Mucosa of descending colon (tissue), 3 donors: ENCODE measurements at regions of chr6 and their contacts with region 1.

Region 1: GRCh38 chr6:113858480-113859348 is 1.6 kb downstream of the MARCKS start:
- DNase-seq: peak; percentile 90 to 95 (median 93)
- ATAC-seq: peak; percentile 85
- H3K4me3 ChIP-seq: peak overlapping the region; percentile 75
- H3K4me1 ChIP-seq: peaks cover 21% of the 10 kb centered on the region
- CTCF ChIP-seq: peak; percentile 95

Region 2: GRCh38 chr6:113414511-113414910 is 444.2 kb before region 1 on chr6:
- intact Hi-C with region 1: loop called in 1 of 2 experiments (anchors 5 kb)
- DNase-seq: peak in 1 of 3 donors; percentile 47
- ATAC-seq: peak; percentile 72
- H3K4me3 ChIP-seq: no peak overlapping the region
- H3K4me1 ChIP-seq: no peaks in the 10 kb centered on the region
- CTCF ChIP-seq: peak; percentile 28

Region 3: DNA sequence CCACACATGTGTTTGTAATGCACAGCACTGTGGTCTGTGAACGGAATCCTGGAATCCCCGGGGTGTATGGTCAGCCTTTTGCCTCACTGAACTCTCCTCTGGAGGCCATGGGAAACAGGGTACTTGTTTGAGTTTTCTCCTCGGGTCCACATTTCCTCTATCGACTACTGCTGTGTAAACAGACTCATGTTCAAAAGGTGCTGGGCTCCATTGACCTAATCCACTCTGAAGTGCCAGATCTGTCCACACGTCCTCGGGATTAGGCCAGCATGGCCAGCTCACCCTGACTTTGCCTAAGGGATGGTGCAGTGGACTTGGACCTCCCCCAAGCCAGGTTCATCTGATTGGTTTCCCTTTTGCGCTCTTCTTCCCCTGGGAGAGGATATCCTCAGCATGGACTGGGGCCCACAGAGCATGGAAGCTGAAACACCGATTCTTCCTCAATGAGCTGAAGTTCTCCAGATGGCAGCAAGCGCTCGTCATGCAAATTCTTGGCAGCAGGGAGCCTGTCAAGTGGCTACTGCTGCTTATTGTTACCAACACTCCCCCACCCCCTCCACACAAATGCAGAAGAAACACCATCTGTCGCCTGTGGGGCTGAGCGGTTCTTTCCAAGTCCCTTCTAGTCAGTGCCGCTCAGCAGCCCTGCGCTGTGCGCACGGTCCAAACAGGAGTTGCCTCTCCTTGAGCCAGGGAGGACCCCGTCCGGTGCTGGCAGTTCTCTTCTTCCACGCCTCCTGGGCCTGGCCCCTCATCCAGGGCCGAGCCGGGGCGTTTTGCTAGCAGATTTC is 294.1 kb before region 1 on chr6:
- intact Hi-C with region 1: loop called in 1 of 2 experiments (anchors 10 kb)
- DNase-seq: peak; percentile 49 to 68 (median 61)
- ATAC-seq: peak; percentile 81
- H3K4me3 ChIP-seq: no peak overlapping the region
- H3K4me1 ChIP-seq: no peaks in the 10 kb centered on the region
- CTCF ChIP-seq: no peak

Region 4: DNA sequence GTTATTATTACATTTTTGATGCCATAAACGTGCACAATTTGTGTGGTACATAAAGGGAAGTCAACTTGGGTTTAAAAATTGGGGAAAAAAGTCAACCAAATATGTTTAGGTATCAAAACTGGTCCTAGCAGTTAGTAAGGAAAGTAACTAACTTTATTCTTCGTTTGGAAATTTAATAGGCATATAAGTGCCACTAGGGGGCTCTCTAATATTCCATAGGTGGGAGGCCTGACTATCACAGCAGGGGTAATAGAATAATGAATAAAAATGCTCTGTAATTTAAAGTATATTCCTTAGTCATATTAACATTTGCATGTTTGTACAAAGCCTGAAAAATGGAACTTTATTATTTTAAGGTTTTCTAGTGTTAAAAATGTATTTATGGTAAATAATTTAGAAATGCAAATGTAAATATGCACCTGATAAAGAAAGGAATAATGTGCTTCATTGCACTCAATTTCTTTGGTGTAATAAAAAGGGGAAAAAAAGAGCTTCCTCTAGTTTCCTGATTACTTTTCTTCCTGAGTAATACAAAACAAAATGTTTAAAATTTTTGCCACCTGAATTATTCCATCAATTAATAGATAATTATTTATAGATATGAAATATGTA is 238.0 kb after region 1 on chr6:
- intact Hi-C with region 1: no loop called
- DNase-seq: peak in 1 of 3 donors; percentile 43
- ATAC-seq: peak; percentile 36
- H3K4me3 ChIP-seq: no peak overlapping the region
- H3K4me1 ChIP-seq: no peaks in the 10 kb centered on the region
- CTCF ChIP-seq: peak; percentile 34